Calu3 (cell line): ENCODE measurements at regions of chr12 and their contacts with region 1.

Region 1: GRCh38 chr12:4307593-4308333 is 13.2 kb upstream of the TIGAR start:
- DNase-seq: peak; percentile 85
- H3K4me3 Mint-ChIP-seq: peak overlapping the region; percentile 54
- H3K27ac Mint-ChIP-seq: peak overlapping the region; percentile 18
- H3K4me1 Mint-ChIP-seq: peaks cover 16% of the 10 kb centered on the region
- H3K27me3 Mint-ChIP-seq: peaks cover 51% of the 10 kb centered on the region
- CTCF ChIP-seq: peak; percentile 81

Region 2: GRCh38 chr12:4353785-4354208 is 46.0 kb after region 1 on chr12:
- CTCF ChIA-PET with region 1: no interaction called
- intact Hi-C with region 1: loop called (anchors 1 kb)
- DNase-seq: no peak
- H3K4me3 Mint-ChIP-seq: no peak overlapping the region
- H3K27ac Mint-ChIP-seq: no peak overlapping the region
- H3K4me1 Mint-ChIP-seq: no peaks in the 10 kb centered on the region
- H3K27me3 Mint-ChIP-seq: no peaks in the 10 kb centered on the region
- CTCF ChIP-seq: no peak

Region 3: GRCh38 chr12:4431436-4431835 is 123.7 kb after region 1 on chr12:
- CTCF ChIA-PET with region 1: interaction called, 13 read pairs
- intact Hi-C with region 1: no loop called
- DNase-seq: no peak
- H3K4me3 Mint-ChIP-seq: no peak overlapping the region
- H3K27ac Mint-ChIP-seq: no peak overlapping the region
- H3K4me1 Mint-ChIP-seq: no peaks in the 10 kb centered on the region
- H3K27me3 Mint-ChIP-seq: peaks cover 50% of the 10 kb centered on the region
- CTCF ChIP-seq: no peak

Region 4: GRCh38 chr12:4526923-4527546 is 219.3 kb after region 1 on chr12:
- CTCF ChIA-PET with region 1: no interaction called
- intact Hi-C with region 1: loop called (anchors 1 kb)
- DNase-seq: no peak
- H3K4me3 Mint-ChIP-seq: no peak overlapping the region
- H3K27ac Mint-ChIP-seq: no peak overlapping the region
- H3K4me1 Mint-ChIP-seq: no peaks in the 10 kb centered on the region
- H3K27me3 Mint-ChIP-seq: no peaks in the 10 kb centered on the region
- CTCF ChIP-seq: peak; percentile 17

Region 5: DNA sequence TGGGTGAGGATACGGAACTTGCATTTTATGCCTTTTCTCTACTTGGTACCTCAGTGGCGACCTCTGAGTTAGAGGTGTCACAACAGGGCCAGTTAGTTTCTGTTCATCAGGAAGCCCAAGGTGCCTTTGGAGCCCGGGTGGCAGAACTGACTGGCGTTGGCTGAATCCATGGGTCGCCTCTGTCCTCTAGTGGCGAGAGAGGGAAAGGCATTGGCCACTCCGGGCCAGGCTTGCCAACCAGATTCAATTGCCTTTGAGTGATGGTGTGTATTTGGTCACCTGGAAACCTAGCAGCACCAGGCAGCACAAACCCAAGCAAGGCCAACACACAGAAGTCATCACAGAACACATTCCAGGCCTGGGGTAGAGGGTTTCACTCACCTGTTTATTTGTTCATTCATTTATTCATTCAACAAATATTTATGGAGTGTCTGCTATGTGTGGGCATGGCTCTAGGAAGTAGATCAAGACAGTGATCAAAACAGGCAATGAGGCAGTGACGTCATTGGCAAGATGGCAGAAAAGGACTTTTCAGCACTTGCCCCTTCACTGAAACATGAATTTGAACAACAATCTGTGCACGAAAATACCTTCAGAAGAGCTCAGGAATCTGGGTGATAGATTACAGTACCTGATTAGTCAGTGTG is 695.4 kb after region 1 on chr12:
- CTCF ChIA-PET with region 1: no interaction called
- intact Hi-C with region 1: loop called (anchors 10 kb)
- DNase-seq: peak; percentile 72
- H3K4me3 Mint-ChIP-seq: no peak overlapping the region
- H3K27ac Mint-ChIP-seq: no peak overlapping the region
- H3K4me1 Mint-ChIP-seq: no peaks in the 10 kb centered on the region
- H3K27me3 Mint-ChIP-seq: peaks cover 16% of the 10 kb centered on the region
- CTCF ChIP-seq: peak; percentile 86